IMR-90 (cell line): ENCODE measurements at regions of chr6 and their contacts with region 1.

Region 1: DNA sequence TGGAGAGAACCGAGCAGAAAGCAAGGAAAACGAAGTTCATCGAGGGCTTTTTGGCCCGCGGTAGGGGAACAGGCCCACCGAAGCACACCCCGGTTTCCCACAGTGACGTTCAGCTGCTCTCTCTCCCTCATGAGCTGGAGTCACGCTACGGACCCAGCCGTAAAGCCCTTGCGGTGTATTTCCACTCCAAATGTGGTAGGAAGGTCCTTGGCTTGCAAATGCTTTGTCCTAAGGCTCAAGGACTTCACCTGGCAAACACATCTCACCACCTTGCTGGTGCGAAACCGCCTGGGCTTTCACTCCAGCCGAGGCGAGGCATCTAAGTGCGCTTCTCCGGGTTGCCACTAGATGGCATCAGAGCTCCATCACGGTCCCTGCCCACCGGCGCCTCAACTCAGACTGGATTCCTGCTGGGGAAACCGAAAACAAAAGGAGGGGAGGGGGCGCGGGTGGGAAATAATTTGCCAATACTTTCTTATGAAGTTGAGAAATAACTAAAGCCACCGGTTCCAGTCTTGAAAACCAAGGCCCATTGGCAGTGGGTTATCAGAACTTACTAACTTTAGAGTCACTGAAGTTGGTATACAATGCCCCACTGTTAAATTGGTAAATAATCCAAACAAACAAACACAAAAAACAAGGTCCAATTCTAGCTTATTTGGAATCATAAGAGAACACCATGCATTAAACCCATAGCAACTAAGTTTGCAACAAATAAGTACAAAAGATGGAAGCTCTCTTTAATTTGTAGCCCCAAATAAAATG is 13.4 kb upstream of the FOXC1 start:
- DNase-seq: peak; percentile 45
- ATAC-seq: peak; percentile 89
- H3K4me3 ChIP-seq: peak overlapping the region; percentile 49
- H3K27ac ChIP-seq: no peak overlapping the region; the same call in 1 of the 2 replicates
- H3K4me1 ChIP-seq: peaks cover 11% of the 10 kb centered on the region
- H3K27me3 ChIP-seq: peaks cover 23% of the 10 kb centered on the region
- CTCF ChIP-seq: peak; percentile 89
- POLR2A ChIP-seq: 0 out of 2 replicates have a peak, but pooled peaks have one; percentile 38
- RAD21 ChIP-seq: peak; percentile 91

Region 2: GRCh38 chr6:2196079-2196679 is 599.9 kb after region 1 on chr6:
- CTCF ChIA-PET with region 1: no interaction called
- POLR2A ChIA-PET with region 1: no interaction called
- dilution Hi-C with region 1: no loop called
- in situ Hi-C with region 1: no loop called
- intact Hi-C with region 1: loop called (anchors 2 kb)
- DNase-seq: peak; percentile 61
- ATAC-seq: peak; percentile 84
- H3K4me3 ChIP-seq: no peak overlapping the region
- H3K27ac ChIP-seq: no peak overlapping the region
- H3K4me1 ChIP-seq: peaks cover 8% of the 10 kb centered on the region; the same call in 1 of the 2 replicates
- H3K27me3 ChIP-seq: no peaks in the 10 kb centered on the region
- CTCF ChIP-seq: peak; percentile 72
- POLR2A ChIP-seq: no peak
- RAD21 ChIP-seq: peak; percentile 81

Region 3: DNA sequence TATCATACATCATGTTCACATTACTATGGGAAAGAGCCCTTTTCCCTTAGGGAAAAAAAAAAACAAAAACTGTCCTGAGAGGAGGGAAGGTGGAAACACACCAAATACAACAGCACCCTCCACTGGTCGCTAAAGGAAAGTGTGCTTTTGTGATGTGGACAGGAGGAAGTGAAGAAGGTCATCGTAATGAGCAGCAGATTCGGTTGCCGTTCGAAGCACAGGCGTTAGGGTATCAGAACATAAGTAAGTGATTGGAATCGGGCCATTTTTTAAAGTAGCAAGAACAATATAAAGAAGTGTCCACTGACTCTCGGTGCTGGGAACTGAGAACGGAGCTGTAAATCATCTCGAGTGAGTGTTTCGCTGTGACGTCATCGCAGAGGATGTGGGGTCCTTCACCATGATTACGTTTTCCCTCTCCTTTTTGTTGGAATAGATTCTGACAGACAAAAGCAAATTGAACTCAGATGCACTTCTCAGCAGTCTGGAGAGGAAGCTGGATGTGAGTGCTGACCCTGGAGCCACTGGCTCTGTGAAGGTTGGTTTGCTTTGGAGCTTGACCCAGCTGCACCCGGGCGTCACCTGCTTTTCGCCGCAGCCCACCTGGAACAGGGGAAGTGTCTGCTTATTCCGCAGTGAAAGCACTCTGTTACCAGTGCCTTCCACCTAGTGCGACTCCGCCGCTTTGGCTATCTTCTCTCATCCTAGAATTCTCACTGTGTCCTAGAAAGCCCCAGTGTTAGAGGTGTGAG is 852.7 kb after region 1 on chr6:
- CTCF ChIA-PET with region 1: interaction called, 6 read pairs
- POLR2A ChIA-PET with region 1: no interaction called
- dilution Hi-C with region 1: no loop called
- in situ Hi-C with region 1: loop called (anchors 5 kb)
- intact Hi-C with region 1: loop called (anchors 1 kb)
- DNase-seq: peak; percentile 89
- ATAC-seq: peak; percentile 95
- H3K4me3 ChIP-seq: peak overlapping the region; percentile 50
- H3K27ac ChIP-seq: no peak overlapping the region
- H3K4me1 ChIP-seq: peaks cover 4% of the 10 kb centered on the region; the same call in 1 of the 2 replicates
- H3K27me3 ChIP-seq: no peaks in the 10 kb centered on the region; the same call in 1 of the 2 replicates
- CTCF ChIP-seq: peak; percentile 89
- POLR2A ChIP-seq: no peak
- RAD21 ChIP-seq: peak; percentile 95

Region 4: GRCh38 chr6:2639896-2640295 is 1043.6 kb after region 1 on chr6:
- CTCF ChIA-PET with region 1: interaction called, 5 read pairs
- POLR2A ChIA-PET with region 1: no interaction called
- dilution Hi-C with region 1: no loop called
- in situ Hi-C with region 1: loop called (anchors 5 kb)
- intact Hi-C with region 1: no loop called
- DNase-seq: no peak
- ATAC-seq: no peak
- H3K4me3 ChIP-seq: no peak overlapping the region
- H3K27ac ChIP-seq: no peak overlapping the region
- H3K4me1 ChIP-seq: no peaks in the 10 kb centered on the region; the same call in 1 of the 2 replicates
- H3K27me3 ChIP-seq: peaks cover 28% of the 10 kb centered on the region
- CTCF ChIP-seq: no peak
- POLR2A ChIP-seq: no peak
- RAD21 ChIP-seq: no peak

Region 5: GRCh38 chr6:2749969-2750600 is 1153.8 kb after region 1 on chr6:
- CTCF ChIA-PET with region 1: no interaction called
- POLR2A ChIA-PET with region 1: no interaction called
- dilution Hi-C with region 1: no loop called
- in situ Hi-C with region 1: loop called (anchors 10 kb)
- intact Hi-C with region 1: loop called (anchors 2 kb)
- DNase-seq: peak; percentile 60
- ATAC-seq: peak; percentile 83
- H3K4me3 ChIP-seq: no peak overlapping the region
- H3K27ac ChIP-seq: no peak overlapping the region
- H3K4me1 ChIP-seq: peaks cover 4% of the 10 kb centered on the region; the same call in 1 of the 2 replicates
- H3K27me3 ChIP-seq: no peaks in the 10 kb centered on the region
- CTCF ChIP-seq: peak; percentile 79
- POLR2A ChIP-seq: no peak
- RAD21 ChIP-seq: peak; percentile 59